Colonic mucosa (tissue), 4 donors: ENCODE measurements at regions of chrX and their contacts with region 1.

Region 1: DNA sequence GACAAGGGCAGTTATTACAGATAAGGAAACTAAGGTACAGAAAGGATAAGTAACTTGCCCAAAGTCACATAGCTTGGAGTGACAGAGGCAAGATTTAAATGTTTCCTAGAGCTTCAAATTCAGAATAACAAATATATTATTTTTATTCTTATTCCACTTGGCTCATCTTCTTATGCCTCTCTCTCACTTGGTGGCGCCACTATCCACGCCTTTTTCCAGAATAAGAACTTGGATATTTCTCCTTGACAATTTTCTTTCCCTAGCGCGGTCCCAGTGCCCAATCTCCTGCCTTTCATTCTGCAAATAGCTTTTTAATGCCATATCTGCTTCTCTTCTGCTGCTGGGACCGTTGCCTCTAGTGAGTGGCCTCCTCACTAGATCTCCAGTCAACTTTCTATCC is 78.5 kb downstream of the MSN start:
- DNase-seq: no peak
- H3K4me3 ChIP-seq: no peak overlapping the region
- H3K27ac ChIP-seq: no peak overlapping the region
- H3K4me1 ChIP-seq: no peaks in the 10 kb centered on the region
- H3K27me3 ChIP-seq: no peaks in the 10 kb centered on the region
- CTCF ChIP-seq: no peak

Region 2: DNA sequence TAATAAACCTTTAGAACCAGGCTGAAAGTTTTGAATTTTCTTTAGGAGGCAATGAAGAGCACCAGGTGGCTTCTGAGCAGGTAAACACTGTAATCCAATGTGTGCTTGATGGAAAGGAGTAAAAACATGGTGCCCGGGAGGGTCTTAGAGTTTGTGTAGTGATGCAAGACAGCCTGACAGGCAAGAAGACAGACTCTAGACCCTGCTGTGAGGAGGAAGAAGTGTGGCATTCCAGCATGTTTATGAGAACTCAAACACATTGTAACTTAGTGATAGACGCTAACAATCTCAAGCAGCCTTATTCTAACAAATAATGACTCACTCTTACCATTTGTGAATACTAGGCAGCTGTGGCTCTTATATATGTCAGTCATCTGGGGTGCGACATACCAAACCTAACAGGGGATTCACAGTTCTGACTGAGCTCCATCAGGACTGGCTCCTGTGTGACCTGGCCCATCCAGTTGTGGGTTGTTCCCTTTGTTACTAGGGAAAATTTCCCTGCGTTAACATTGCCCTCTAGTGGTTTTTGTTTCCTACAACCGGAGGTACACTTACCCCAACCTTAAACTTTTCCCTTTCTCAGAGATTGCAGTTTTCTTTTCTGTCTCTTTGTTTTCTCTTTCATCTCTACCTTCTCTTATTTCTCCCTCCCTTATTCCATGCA is 240.1 kb after region 1 on chrX:
- intact Hi-C with region 1: loop called (anchors 5 kb)
- DNase-seq: peak; percentile 48
- H3K4me3 ChIP-seq: no peak overlapping the region
- H3K27ac ChIP-seq: no peak overlapping the region
- H3K4me1 ChIP-seq: no peaks in the 10 kb centered on the region
- H3K27me3 ChIP-seq: no peaks in the 10 kb centered on the region
- CTCF ChIP-seq: peak; percentile 52